GM10248 (cell line): ENCODE measurements at regions of chr1 and their contacts with region 1.

Region 1: DNA sequence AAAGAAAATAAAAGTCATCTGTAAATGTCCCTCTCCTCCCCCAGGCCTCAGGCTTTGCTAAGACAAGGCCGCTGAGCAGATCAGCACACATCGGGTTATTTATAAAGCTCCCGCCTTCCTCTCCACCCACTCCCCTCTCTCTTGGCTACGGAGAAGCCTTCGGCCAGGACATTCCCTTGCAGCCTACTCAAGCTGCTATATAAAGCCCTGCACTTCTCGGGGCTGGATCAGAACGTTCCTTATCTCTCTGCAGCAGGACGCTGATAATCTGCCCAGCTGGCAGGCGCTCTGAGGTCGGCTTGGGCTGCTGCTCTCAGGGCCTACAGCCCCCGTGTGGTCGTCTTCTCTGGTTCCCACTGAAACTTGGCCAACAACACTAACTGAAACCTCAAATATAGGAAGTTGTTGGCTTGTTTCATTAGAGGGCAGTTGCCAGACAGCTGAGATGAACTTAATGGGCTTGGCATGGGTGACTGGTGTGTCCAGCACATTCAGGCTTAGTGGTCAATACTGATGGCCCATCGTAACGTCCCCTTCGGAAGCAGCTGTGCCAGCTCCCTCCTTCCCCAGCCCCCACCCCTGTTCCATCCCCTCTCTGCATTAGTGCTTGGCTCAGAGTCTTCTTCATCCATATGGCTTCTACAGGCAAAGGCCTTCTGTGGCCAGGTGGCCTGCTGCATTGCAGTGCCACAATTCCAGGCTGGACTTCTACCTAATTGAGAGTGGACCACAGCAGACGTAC is 64.6 kb downstream of the IER5 start:
- DNase-seq: peak; percentile 70
- CTCF ChIP-seq: peak; percentile 28

Region 2: DNA sequence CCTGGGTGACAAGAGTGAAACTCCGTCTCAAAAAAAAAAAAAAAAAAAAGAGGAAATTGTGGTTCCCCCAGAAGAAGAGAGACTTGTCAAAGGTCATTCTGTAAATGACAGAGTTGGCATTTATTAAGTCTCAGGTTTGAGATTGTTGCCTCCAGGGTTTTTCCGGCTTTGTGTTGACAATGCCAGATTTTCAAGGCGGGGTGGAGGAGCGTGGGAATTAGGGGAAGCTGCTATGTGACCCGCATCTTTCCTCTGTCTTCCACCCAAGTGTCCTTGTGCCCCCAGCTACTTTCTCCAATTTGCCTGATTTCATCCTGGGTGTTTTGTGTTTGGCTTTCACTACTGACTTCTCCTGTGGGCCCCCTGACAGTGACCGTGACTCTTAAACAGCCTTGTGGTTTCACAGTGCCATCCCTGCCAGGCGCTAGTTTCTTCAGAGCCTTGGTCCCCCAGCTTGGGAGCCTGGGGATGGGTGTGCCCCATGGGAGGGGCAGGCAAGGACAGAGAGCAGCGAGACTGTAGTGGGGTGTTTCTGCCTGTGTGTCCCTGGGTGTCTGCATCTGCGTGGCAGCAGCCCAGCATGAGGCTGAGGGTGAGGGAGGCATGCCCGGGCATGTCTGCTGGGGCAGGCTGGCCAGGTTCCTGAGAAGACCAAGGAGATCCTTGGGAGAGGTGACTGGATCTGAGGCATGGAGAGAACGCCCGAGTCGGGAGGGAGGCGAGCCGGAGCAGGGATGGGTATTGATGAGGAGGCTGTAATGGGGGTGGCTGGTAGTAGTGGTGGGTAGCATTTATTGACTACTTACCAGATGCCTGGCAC is 18.3 kb before region 1 on chr1:
- CTCF ChIA-PET with region 1: interaction called, 90 read pairs
- POLR2A ChIA-PET with region 1: interaction called, 3 read pairs
- DNase-seq: peak; percentile 73
- CTCF ChIP-seq: no peak

Region 3: GRCh38 chr1:181166377-181167196 is 13.5 kb after region 1 on chr1:
- CTCF ChIA-PET with region 1: interaction called, 18 read pairs
- POLR2A ChIA-PET with region 1: no interaction called
- DNase-seq: peak; percentile 79
- CTCF ChIP-seq: peak; percentile 86